ENCODE measurements at regions of chr10 and their contacts with region 1.

Region 1: GRCh38 chr10:22988581-22989360 is 60.9 kb downstream of the ARMC3 start:
- DNase-seq: peak; percentile 73
- ATAC-seq: peak; percentile 68
- H3K4me3 Mint-ChIP-seq: no peak overlapping the region
- H3K27ac Mint-ChIP-seq: no peak overlapping the region
- H3K4me1 Mint-ChIP-seq: peaks cover 15% of the 10 kb centered on the region
- H3K27me3 Mint-ChIP-seq: peaks cover 5% of the 10 kb centered on the region

Region 2: GRCh38 chr10:21989453-21990154 is 999.2 kb before region 1 on chr10:
- CTCF ChIA-PET with region 1: interaction called, 23 read pairs
- POLR2A ChIA-PET with region 1: no interaction called
- intact Hi-C with region 1: loop called (anchors 1 to 2 kb)
- DNase-seq: peak; percentile 57
- ATAC-seq: peak; percentile 94
- H3K4me3 Mint-ChIP-seq: no peak overlapping the region
- H3K27ac Mint-ChIP-seq: no peak overlapping the region
- H3K4me1 Mint-ChIP-seq: peaks cover 2% of the 10 kb centered on the region
- H3K27me3 Mint-ChIP-seq: no peaks in the 10 kb centered on the region

Region 3: GRCh38 chr10:22259280-22259679 is 729.5 kb before region 1 on chr10:
- CTCF ChIA-PET with region 1: interaction called, 3 read pairs
- POLR2A ChIA-PET with region 1: no interaction called
- intact Hi-C with region 1: loop called (anchors 2 to 5 kb)
- DNase-seq: peak; percentile 33
- ATAC-seq: peak; percentile 68
- H3K4me3 Mint-ChIP-seq: no peak overlapping the region
- H3K27ac Mint-ChIP-seq: no peak overlapping the region
- H3K4me1 Mint-ChIP-seq: peaks cover 24% of the 10 kb centered on the region
- H3K27me3 Mint-ChIP-seq: peaks cover 17% of the 10 kb centered on the region

Region 4: GRCh38 chr10:22550732-22551131 is 438.0 kb before region 1 on chr10:
- CTCF ChIA-PET with region 1: interaction called, 5 read pairs
- POLR2A ChIA-PET with region 1: no interaction called
- intact Hi-C with region 1: loop called (anchors 1 kb)
- DNase-seq: peak; percentile 81
- ATAC-seq: no peak
- H3K4me3 Mint-ChIP-seq: no peak overlapping the region
- H3K27ac Mint-ChIP-seq: no peak overlapping the region
- H3K4me1 Mint-ChIP-seq: peaks cover 13% of the 10 kb centered on the region
- H3K27me3 Mint-ChIP-seq: no peaks in the 10 kb centered on the region

Region 5: GRCh38 chr10:22655311-22655981 is 333.3 kb before region 1 on chr10:
- CTCF ChIA-PET with region 1: no interaction called
- POLR2A ChIA-PET with region 1: no interaction called
- intact Hi-C with region 1: loop called (anchors 5 kb)
- DNase-seq: peak; percentile 62
- ATAC-seq: peak; percentile 57
- H3K4me3 Mint-ChIP-seq: peak overlapping the region; percentile 63
- H3K27ac Mint-ChIP-seq: peak overlapping the region; percentile 85
- H3K4me1 Mint-ChIP-seq: peaks cover 98% of the 10 kb centered on the region
- H3K27me3 Mint-ChIP-seq: no peaks in the 10 kb centered on the region